Activated CD8-positive, alpha-beta memory T cell treated with anti-CD3 and anti-CD28 coated beads, Interleukin-2, amount 10 ng/mL, durations not matched to agents 7 days and 5 days (primary cell): ENCODE measurements at regions of chr9 and their contacts with region 1.

Region 1: GRCh38 chr9:120892748-120893610 is 16.0 kb upstream of the PHF19 start:
- DNase-seq: peak; percentile 87
- ATAC-seq: peak; percentile 68
- H3K4me3 Mint-ChIP-seq: peak overlapping the region; percentile 56
- H3K27ac Mint-ChIP-seq: peak overlapping the region; percentile 96
- H3K4me1 Mint-ChIP-seq: peaks cover 80% of the 10 kb centered on the region
- H3K27me3 Mint-ChIP-seq: no peaks in the 10 kb centered on the region

Region 2: GRCh38 chr9:120868676-120869359 is 24.2 kb before region 1 on chr9:
- CTCF ChIA-PET with region 1: interaction called, 10 read pairs
- DNase-seq: peak; percentile 97
- ATAC-seq: peak; percentile 92
- H3K4me3 Mint-ChIP-seq: peak overlapping the region; percentile 79
- H3K27ac Mint-ChIP-seq: peak overlapping the region; percentile 98
- H3K4me1 Mint-ChIP-seq: peaks cover 43% of the 10 kb centered on the region
- H3K27me3 Mint-ChIP-seq: no peaks in the 10 kb centered on the region

Region 3: GRCh38 chr9:120904061-120904977 is 11.3 kb after region 1 on chr9:
- CTCF ChIA-PET with region 1: interaction called, 27 read pairs
- DNase-seq: peak; percentile 66
- ATAC-seq: peak; percentile 24
- H3K4me3 Mint-ChIP-seq: no peak overlapping the region
- H3K27ac Mint-ChIP-seq: peak overlapping the region; percentile 85
- H3K4me1 Mint-ChIP-seq: peaks cover 85% of the 10 kb centered on the region
- H3K27me3 Mint-ChIP-seq: no peaks in the 10 kb centered on the region